Right ventricle myocardium inferior (tissue), 1 donor: ENCODE measurements at regions of chr14 and their contacts with region 1.

Region 1: DNA sequence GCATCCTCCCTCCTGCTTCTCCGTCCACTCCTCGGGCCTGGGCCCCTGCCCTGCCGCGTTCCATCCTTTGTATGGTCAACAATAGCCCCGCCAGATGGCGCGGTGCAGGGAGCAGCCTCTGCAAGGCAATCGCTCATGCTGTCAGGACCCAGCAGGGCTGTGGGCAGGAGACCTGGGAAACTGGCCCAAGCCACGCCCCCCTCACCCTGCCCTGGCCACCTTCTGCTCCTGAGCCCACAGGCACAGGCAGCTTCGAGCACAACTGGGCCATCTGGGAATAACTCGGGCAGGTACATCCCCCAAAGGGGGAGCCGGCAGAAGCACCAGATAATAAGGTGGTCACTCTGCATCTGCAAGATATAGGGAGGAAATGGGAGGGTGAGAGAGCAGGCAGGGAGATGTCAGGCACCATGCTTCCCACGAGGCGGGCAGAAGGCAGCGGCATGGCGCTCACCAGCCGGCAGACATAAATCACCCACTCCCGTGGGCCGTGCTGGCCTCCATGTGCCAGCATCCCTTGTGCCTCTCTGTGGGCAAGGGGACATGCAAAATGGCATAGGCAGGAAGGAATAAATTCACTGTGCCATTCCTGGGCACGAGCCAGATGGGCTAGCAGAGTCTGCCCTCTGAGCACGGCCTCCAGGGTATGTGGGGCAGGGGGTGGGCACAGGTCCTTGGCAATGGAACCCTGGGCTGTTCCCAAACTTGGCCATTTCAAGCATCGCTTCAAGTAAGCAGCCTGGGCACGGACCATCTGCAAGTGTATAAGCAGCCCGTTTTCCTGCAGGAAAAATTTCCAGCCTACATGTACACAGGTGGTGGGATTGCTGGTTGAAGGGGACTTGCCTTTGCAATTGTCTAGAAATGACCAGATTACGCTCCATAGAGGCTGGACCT is 40.5 kb downstream of the CCDC85C start:
- DNase-seq: peak; percentile 84
- ATAC-seq: peak; percentile 81

Region 2: GRCh38 chr14:99524804-99525698 is 38.4 kb before region 1 on chr14:
- intact Hi-C with region 1: loop called (anchors 5 kb)
- DNase-seq: peak; percentile 59
- ATAC-seq: no peak

Region 3: GRCh38 chr14:99601361-99601831 is 37.9 kb after region 1 on chr14:
- intact Hi-C with region 1: loop called (anchors 2 kb)
- DNase-seq: peak; percentile 61
- ATAC-seq: no peak